Activated CD4-positive, alpha-beta T cell treated with anti-CD3 and anti-CD28 coated beads, Interleukin-2, amount 10 ng/mL, durations not matched to agents 7 days and 5 days (primary cell): ENCODE measurements at regions of chr7 and their contacts with region 1.

Region 1: DNA sequence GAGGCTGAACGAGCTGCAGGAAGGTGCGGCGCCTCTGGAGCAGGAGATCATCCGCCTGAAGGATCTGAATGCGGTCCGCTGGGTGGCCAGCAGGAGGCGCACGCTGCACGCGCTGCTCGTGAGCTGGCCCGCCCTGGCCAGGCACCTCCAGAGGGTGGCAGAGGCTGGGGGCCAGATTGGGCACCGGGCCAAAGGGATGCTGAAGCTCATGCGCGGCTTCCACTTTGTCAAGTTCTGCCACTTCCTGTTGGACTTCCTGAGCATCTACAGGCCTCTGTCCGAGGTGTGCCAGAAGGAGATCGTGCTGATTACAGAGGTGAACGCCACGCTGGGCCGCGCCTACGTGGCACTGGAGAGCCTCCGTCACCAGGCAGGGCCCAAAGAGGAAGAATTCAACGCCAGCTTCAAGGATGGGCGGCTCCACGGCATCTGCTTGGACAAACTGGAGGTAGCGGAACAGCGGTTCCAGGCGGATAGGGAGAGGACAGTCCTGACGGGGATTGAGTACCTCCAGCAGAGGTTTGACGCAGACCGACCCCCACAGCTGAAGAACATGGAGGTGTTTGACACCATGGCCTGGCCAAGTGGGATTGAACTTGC is 12.2 kb upstream of the ATP6V0E2 start:
- DNase-seq: no peak
- H3K4me3 Mint-ChIP-seq: no peak overlapping the region
- H3K27ac Mint-ChIP-seq: peak overlapping the region; percentile 25
- H3K4me1 Mint-ChIP-seq: peaks cover 56% of the 10 kb centered on the region
- H3K27me3 Mint-ChIP-seq: no peaks in the 10 kb centered on the region

Region 2: GRCh38 chr7:149654588-149654987 is 207.0 kb before region 1 on chr7:
- CTCF ChIA-PET with region 1: no interaction called
- POLR2A ChIA-PET with region 1: no interaction called
- DNase-seq: no peak
- H3K4me3 Mint-ChIP-seq: no peak overlapping the region
- H3K27ac Mint-ChIP-seq: no peak overlapping the region
- H3K4me1 Mint-ChIP-seq: no peaks in the 10 kb centered on the region
- H3K27me3 Mint-ChIP-seq: peaks cover 46% of the 10 kb centered on the region

Region 3: GRCh38 chr7:149872419-149873073 is 11.0 kb after region 1 on chr7:
- CTCF ChIA-PET with region 1: interaction called, 22 read pairs
- POLR2A ChIA-PET with region 1: no interaction called
- DNase-seq: no peak
- H3K4me3 Mint-ChIP-seq: peak overlapping the region; percentile 78
- H3K27ac Mint-ChIP-seq: peak overlapping the region; percentile 82
- H3K4me1 Mint-ChIP-seq: peaks cover 82% of the 10 kb centered on the region
- H3K27me3 Mint-ChIP-seq: no peaks in the 10 kb centered on the region